Right ventricle myocardium inferior (tissue), 1 donor: ENCODE measurements at regions of chr1 and their contacts with region 1.

Region 1: GRCh38 chr1:61049850-61050540 is 32.4 kb upstream of the NFIA start:
- DNase-seq: peak; percentile 96
- ATAC-seq: peak; percentile 85

Region 2: GRCh38 chr1:61120998-61121397 is 71.0 kb after region 1 on chr1:
- intact Hi-C with region 1: loop called (anchors 5 kb)
- DNase-seq: no peak
- ATAC-seq: peak; percentile 76

Region 3: DNA sequence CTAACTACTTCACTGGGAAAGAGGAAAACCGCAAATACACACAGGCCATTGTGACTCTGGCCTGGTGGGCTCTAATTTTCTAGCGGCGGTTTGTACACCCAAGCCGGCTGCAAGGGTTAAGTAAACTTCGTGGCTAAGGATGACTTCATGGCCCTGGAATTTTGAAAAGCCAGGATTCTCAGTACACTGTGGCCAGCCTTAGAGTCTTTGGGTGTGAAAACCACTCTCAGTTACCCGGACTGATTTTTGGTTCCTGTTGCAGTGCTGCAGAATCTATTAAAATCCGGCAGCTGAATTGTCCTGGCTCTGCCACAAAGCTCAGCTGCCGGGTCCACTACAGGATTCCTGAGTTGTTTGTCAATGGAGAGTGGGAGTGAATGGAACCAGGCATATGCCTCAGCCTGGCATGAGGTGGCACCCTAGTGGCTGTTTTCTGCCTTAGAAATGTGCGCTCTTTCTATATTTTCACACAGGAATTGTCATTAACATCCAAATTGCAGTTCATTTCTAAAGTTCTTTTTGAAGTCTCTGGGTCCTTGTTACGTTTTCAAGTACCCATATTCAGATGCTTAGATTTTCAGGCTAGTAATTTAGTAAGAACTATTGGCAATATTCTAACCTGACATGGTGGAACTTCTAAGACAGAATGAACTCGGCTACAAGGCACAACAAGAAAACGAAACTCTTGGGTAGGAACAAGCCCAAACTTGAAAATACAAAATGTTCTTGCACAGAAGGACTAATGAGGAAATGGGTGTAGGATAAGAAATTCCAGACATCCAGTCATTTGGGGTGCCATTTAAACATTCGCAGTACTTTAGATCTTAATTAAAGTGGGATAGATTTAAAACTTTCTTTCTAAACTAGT is 288.2 kb after region 1 on chr1:
- intact Hi-C with region 1: loop called (anchors 1 kb)
- DNase-seq: peak; percentile 73
- ATAC-seq: peak; percentile 84

Region 4: GRCh38 chr1:61588736-61589672 is 539.0 kb after region 1 on chr1:
- intact Hi-C with region 1: loop called (anchors 5 kb)
- DNase-seq: peak; percentile 66
- ATAC-seq: peak; percentile 62

Region 5: DNA sequence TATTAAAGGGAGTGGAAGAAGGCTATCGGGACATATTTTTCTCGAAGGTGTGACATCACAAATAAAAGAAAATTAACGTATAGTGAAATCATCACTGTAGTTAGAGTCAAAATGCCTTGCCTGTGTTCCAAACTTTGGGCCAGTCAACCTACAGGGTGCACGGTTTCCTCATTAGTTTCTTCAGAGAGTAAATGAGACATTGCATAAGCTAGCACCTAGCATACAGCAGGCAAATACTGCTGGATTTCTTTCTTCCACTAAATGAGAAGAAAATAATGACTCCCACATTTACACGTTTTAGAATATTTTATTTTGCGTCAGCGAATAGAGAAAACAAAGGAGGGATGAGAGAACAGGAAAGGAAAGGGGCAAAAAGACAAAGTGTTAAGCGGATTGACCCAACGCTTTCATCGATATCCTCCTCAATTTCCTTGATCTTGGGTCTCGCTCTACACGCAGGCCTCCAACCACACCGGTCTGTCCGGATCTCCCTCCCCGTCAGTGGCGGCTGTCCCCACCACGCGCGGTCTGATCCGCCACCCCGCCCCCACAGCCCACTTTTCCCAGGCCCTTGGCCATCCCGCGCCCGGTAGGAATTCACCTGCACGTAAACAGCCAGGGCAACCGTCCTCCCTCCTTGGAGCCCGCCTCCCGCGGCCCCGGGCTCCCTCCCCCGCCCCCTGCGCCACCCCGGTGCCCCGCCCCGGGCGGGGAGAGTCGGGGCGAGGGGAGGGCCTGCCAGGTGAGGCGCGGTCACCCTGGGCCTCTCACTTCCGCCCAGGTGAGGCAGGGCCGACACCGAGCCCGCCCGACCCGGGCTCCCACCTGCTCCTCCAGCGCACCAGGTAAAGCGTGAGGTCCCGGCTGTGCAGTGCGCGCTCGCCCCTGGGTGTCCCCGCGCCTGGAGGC is 692.0 kb after region 1 on chr1 and contains the start of gene PATJ:
- intact Hi-C with region 1: loop called (anchors 10 kb)
- DNase-seq: peak; percentile 68
- ATAC-seq: peak; percentile 76
- total RNA-seq, gene PATJ: 121 TPM